Right cardiac atrium (tissue), 5 donors: ENCODE measurements at regions of chr20 and their contacts with region 1.

Region 1: GRCh38 chr20:15708984-15709598 is 864.2 kb downstream of the KIF16B start:
- DNase-seq: peak; percentile 36 to 81 (median 73)
- ATAC-seq: peak in 1 of 2 donors; percentile 38
- H3K4me3 ChIP-seq: no peak overlapping the region
- H3K27ac ChIP-seq: no peak overlapping the region
- H3K4me1 ChIP-seq: no peaks in the 10 kb centered on the region
- H3K27me3 ChIP-seq: no peaks in the 10 kb centered on the region

Region 2: GRCh38 chr20:15419856-15420255 is 289.2 kb before region 1 on chr20:
- intact Hi-C with region 1: no loop called
- DNase-seq: no peak
- ATAC-seq: no peak
- H3K4me3 ChIP-seq: no peak overlapping the region
- H3K27ac ChIP-seq: no peak overlapping the region
- H3K4me1 ChIP-seq: no peaks in the 10 kb centered on the region
- H3K27me3 ChIP-seq: no peaks in the 10 kb centered on the region

Region 3: GRCh38 chr20:16476032-16476431 is 766.9 kb after region 1 on chr20:
- intact Hi-C with region 1: loop called in 1 of 4 experiments (anchors 10 kb)
- DNase-seq: no peak
- ATAC-seq: peak; percentile 63 to 80
- H3K4me3 ChIP-seq: no peak overlapping the region
- H3K27ac ChIP-seq: no peak overlapping the region
- H3K4me1 ChIP-seq: peaks cover 2% of the 10 kb centered on the region
- H3K27me3 ChIP-seq: no peaks in the 10 kb centered on the region